Activated T-helper 1 cell treated with anti-CD3 and anti-CD28 coated beads, Interleukin-12 subunit alpha, Interleukin-12 subunit beta, Interleukin-2, Interleukin-4 antibody, amounts not matched to agents 30 ng/mL and 10 ng/mL and 1 ng/mL, durations not matched to agents 14 hours and 24 hours and 36 hours (primary cell): ENCODE measurements at regions of chr1 and their contacts with region 1.

Region 1: DNA sequence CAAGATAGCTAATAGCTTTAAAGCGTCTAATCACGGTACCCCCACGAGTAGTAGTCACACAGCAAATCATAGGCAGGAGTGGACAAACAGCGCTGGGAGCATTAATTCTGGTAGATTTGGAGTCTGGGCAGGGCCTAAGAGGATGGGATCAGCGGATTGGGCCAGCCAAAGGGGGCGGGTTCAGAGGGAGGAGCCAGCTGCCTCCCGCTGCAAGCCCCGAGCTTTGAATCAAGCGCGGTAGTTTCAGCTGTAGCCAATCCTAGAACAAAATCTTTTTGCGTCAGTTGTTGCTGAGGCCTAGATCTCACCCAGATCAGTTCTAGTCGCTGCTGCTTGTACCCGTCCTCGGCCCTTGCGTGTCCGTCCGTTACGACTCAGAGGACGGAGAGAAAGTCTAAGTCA is 576 bp upstream of the NASP start:
- DNase-seq: peak; percentile 93
- H3K4me3 Mint-ChIP-seq: peak overlapping the region; percentile 100
- H3K27ac Mint-ChIP-seq: peak overlapping the region; percentile 98
- H3K4me1 Mint-ChIP-seq: peaks cover 29% of the 10 kb centered on the region
- H3K27me3 Mint-ChIP-seq: no peaks in the 10 kb centered on the region

Region 2: DNA sequence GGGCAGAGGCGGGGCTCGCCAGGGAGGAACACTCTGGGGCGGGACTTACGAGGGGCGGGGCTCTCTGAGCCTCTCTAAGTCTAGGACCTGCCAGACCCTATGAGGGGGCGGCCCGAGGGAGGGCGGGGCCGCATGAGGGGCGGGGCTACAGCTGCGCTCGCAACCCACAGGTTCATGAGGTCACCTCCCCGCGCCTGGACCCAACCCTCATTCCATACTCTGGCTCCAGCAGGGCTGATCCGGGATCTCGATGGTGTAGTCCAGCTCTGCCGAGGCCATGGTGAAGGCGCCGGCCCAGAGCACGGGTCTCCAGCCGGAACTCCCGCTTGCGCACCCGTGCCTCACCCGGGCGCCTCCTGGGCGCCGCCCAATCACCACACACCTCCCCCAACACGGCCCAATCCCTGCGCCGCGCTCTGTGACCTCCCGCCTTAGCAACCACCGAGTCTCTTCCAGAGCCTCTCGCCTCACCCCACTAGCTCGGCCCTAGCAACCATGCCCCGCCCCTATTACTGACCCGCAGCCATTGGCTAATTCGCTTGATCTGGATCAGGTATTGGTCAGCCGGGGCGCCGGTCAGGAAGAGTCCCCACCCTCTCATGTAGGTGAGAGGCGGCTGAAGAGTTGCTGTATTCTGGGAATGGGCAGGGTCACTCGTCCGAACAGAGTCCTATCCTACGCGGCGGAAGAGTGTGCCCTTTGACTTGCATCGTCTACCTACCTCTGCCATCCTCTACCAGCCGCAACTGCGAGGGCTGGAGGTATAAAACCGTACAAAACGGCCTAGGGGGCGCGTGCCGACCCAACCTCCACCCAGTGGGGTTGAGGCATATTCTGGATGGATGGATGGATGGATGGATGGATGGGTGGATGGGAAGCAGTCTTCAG is 908.9 kb before region 1 on chr1 and contains the starts of genes ARMH1 and TMEM53:
- intact Hi-C with region 1: loop called (anchors 1 kb)
- DNase-seq: peak; percentile 98
- H3K4me3 Mint-ChIP-seq: peak within 1 kb of the TSS; percentile 80
- H3K27ac Mint-ChIP-seq: peak within 1 kb of the TSS; percentile 79
- H3K4me1 Mint-ChIP-seq: peaks cover 30% of the 10 kb centered on the region
- H3K27me3 Mint-ChIP-seq: no peaks in the 10 kb centered on the region
- total RNA-seq, gene ARMH1: 95.3 and 99.8 TPM in 2 replicates
- total RNA-seq, gene TMEM53: 4.3 and 6.6 TPM in 2 replicates

Region 3: GRCh38 chr1:45011837-45012638 is 571.2 kb before region 1 on chr1 and contains the start of gene UROD:
- intact Hi-C with region 1: loop called (anchors 1 kb)
- DNase-seq: peak; percentile 86
- H3K4me3 Mint-ChIP-seq: peak within 1 kb of the TSS; percentile 84
- H3K27ac Mint-ChIP-seq: peak within 1 kb of the TSS; percentile 90
- H3K4me1 Mint-ChIP-seq: peaks cover 58% of the 10 kb centered on the region
- H3K27me3 Mint-ChIP-seq: no peaks in the 10 kb centered on the region
- total RNA-seq, gene UROD: 79.9 and 81.9 TPM in 2 replicates

Region 4: DNA sequence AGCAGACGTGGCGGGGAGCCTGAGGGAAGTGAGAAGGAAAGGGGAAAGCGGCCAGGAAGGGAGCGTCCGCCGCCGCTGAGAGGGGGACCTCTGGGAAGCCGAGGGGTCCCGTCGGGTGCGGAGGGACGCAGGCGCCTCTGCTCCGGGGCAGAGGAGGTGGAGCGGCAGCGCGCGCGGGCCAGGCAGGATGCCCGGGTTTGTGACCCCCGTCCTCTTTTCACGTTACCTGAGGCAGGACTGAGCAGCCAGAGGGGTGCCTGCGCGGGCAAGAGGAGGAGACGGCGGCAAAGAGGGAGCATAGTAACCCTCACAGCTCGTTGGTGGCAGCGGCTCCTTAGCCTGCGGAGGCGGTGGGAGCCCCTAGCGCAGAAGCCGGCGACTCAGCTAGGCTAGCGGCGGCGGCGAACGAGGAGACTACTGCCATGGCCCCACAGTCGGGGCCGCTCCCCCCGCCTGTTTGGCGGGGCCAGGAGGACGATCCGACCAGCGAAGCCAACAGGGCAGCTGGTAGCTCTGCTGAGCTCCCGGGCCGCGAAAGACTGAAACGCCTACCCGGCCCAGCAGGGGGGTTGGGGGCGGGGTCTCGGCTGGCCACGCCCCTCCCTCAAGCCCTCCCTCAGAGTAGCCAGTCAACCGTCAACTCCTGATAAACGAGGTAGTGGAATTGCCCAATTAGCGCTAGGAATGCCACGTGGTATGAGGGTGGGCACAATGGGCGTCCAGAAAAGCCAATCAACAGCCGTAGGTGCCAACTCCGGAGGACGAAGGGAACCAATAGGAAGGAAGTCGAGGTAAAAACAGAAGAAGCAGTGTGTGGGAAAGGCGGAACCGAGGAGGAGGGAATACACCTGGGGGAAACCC is 92.4 kb before region 1 on chr1 and contains the start of gene TESK2:
- intact Hi-C with region 1: loop called (anchors 1 kb)
- DNase-seq: peak; percentile 97
- H3K4me3 Mint-ChIP-seq: no peak within 1 kb of the TSS
- H3K27ac Mint-ChIP-seq: no peak within 1 kb of the TSS
- H3K4me1 Mint-ChIP-seq: peaks cover 5% of the 10 kb centered on the region
- H3K27me3 Mint-ChIP-seq: no peaks in the 10 kb centered on the region
- total RNA-seq, gene TESK2: 1.4 and 1.6 TPM in 2 replicates

Region 5: DNA sequence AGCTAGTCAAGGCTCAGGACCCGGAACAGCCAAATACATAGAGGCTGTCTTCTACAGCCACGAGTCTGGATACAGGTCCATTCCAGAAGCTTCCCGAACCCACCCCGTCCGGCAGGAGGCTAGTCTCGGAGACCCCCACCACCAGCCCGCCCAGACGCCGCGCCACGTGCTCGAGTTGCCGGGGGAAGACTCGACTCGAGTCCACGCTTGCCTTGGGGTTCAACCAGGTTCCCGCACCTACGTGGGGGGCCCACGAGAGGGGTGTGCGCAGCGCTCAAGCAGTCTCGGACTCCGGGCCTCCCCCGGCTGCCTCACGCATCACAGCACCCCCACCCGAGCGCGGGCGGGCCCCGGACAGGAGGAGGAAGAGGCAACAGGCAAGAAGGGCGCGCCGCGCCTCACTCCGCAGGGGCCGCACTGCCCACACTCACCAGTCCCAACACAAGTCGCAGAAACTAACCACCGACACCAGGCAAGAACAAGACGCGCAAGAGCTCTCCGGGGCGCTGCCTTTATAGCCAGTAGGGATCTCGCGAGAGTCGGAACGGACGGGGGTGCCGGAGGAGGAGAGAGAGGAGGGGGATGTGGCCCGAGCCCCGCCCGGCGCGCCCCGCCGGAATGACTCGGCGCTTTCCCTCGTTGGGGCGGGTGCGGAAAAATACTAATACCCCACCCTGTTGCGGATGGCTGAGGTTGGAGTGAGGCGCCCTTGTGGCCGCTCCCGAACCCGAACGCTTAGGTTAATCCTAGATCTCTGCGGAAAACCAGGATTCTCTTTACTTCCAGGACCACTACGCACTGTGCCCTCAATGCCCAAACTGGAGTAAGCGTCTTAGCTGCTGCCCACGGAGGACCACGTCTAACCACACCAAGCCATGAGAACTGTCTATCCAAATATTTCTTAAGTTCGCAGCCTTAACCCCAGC is 61.6 kb before region 1 on chr1 and contains the start of gene PRDX1:
- intact Hi-C with region 1: loop called (anchors 1 kb)
- DNase-seq: peak; percentile 97
- H3K4me3 Mint-ChIP-seq: peak within 1 kb of the TSS; percentile 98
- H3K27ac Mint-ChIP-seq: peak within 1 kb of the TSS; percentile 91
- H3K4me1 Mint-ChIP-seq: peaks cover 44% of the 10 kb centered on the region
- H3K27me3 Mint-ChIP-seq: peaks cover 1% of the 10 kb centered on the region
- total RNA-seq, gene PRDX1: 635 and 655 TPM in 2 replicates

Region 6: GRCh38 chr1:45750298-45751038 is 167.2 kb after region 1 on chr1 and contains the start of gene IPP:
- intact Hi-C with region 1: loop called (anchors 1 kb)
- DNase-seq: peak; percentile 96
- H3K4me3 Mint-ChIP-seq: peak within 1 kb of the TSS; percentile 98
- H3K27ac Mint-ChIP-seq: peak within 1 kb of the TSS; percentile 96
- H3K4me1 Mint-ChIP-seq: peaks cover 10% of the 10 kb centered on the region
- H3K27me3 Mint-ChIP-seq: no peaks in the 10 kb centered on the region
- total RNA-seq, gene IPP: 12.3 and 13.9 TPM in 2 replicates

Region 7: GRCh38 chr1:46132529-46133180 is 549.4 kb after region 1 on chr1 and contains the start of gene PIK3R3:
- intact Hi-C with region 1: loop called (anchors 1 kb)
- DNase-seq: peak; percentile 89
- H3K4me3 Mint-ChIP-seq: peak within 1 kb of the TSS; percentile 96
- H3K27ac Mint-ChIP-seq: peak within 1 kb of the TSS; percentile 98
- H3K4me1 Mint-ChIP-seq: peaks cover 42% of the 10 kb centered on the region
- H3K27me3 Mint-ChIP-seq: peaks cover 64% of the 10 kb centered on the region
- total RNA-seq, gene PIK3R3: 3.6 TPM in 2 replicates